Sigmoid colon (tissue), 7 donors: ENCODE measurements at regions of chr16 and their contacts with region 1.

Region 1: GRCh38 chr16:74862741-74863244 is 88.2 kb upstream of the FA2H start:
- DNase-seq: no peak
- H3K4me3 ChIP-seq: no peak overlapping the region
- H3K27ac ChIP-seq: no peak overlapping the region
- H3K4me1 ChIP-seq: peaks cover 0 to 9% (median 7%) of the 10 kb centered on the region in 4 donors
- H3K27me3 ChIP-seq: no peaks in the 10 kb centered on the region
- CTCF ChIP-seq: peak; percentile 65 to 87 (median 73)
- EP300 ChIP-seq: no peak
- POLR2A ChIP-seq: no peak

Region 2: GRCh38 chr16:74448992-74449434 is 413.8 kb before region 1 on chr16:
- intact Hi-C with region 1: no loop called
- DNase-seq: peak; percentile 87
- H3K4me3 ChIP-seq: no peak overlapping the region
- H3K27ac ChIP-seq: peak overlapping the region; percentile 57 to 70 (median 64)
- H3K4me1 ChIP-seq: peaks cover 0 to 14% (median 10%) of the 10 kb centered on the region in 4 donors
- H3K27me3 ChIP-seq: no peaks in the 10 kb centered on the region
- CTCF ChIP-seq: no peak
- EP300 ChIP-seq: no peak
- POLR2A ChIP-seq: no peak

Region 3: GRCh38 chr16:74709441-74709877 is 153.3 kb before region 1 on chr16:
- intact Hi-C with region 1: loop called (anchors 2 kb)
- DNase-seq: peak; percentile 85
- H3K4me3 ChIP-seq: no peak overlapping the region
- H3K27ac ChIP-seq: peak overlapping the region in 1 of 4 donors; percentile 4
- H3K4me1 ChIP-seq: no peaks in the 10 kb centered on the region
- H3K27me3 ChIP-seq: no peaks in the 10 kb centered on the region
- CTCF ChIP-seq: peak; percentile 84 to 95 (median 92)
- EP300 ChIP-seq: no peak
- POLR2A ChIP-seq: no peak

Region 4: GRCh38 chr16:74793571-74793970 is 69.2 kb before region 1 on chr16:
- intact Hi-C with region 1: no loop called
- DNase-seq: no peak
- H3K4me3 ChIP-seq: no peak overlapping the region
- H3K27ac ChIP-seq: no peak overlapping the region
- H3K4me1 ChIP-seq: no peaks in the 10 kb centered on the region
- H3K27me3 ChIP-seq: peaks cover 0 to 3% (median 0%) of the 10 kb centered on the region in 3 donors
- CTCF ChIP-seq: no peak
- EP300 ChIP-seq: no peak
- POLR2A ChIP-seq: no peak

Region 5: GRCh38 chr16:74813109-74813641 is 49.6 kb before region 1 on chr16:
- intact Hi-C with region 1: loop called (anchors 1 kb)
- DNase-seq: peak; percentile 78
- H3K4me3 ChIP-seq: no peak overlapping the region
- H3K27ac ChIP-seq: no peak overlapping the region
- H3K4me1 ChIP-seq: peaks cover 0 to 4% (median 3%) of the 10 kb centered on the region in 4 donors
- H3K27me3 ChIP-seq: no peaks in the 10 kb centered on the region
- CTCF ChIP-seq: peak; percentile 66 to 96 (median 91)
- EP300 ChIP-seq: no peak
- POLR2A ChIP-seq: no peak

Region 6: DNA sequence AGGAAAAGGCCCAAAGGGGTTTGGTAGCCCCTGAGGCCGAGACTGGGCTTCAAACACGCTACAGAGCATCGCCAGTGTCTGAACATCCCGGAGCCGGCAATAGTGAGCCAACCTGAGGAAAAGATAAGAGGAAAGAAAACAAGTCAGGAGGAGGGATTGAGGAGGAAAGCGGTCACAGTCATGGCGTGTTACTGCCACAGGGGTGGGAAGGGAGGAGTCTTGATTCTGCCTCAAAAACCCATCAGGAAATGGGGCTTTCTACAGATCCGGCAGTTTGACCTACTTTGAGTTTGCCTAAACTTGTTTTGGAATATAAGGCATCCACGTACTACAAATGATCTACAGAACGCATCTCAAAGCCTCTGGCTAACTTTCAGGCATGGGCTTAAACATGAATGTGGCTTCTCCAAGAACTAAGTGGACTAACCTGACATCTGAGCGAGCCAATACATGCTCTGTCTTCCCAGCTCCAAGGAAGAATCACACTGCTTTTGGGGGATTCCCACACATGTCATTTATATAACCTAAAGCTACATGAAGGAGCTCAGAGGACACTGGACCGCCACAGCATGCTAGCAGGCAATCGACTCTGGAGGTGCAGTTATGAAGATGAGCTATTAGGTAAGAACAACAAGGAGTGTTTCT is 25.5 kb after region 1 on chr16:
- intact Hi-C with region 1: no loop called
- DNase-seq: no peak
- H3K4me3 ChIP-seq: no peak overlapping the region
- H3K27ac ChIP-seq: no peak overlapping the region
- H3K4me1 ChIP-seq: no peaks in the 10 kb centered on the region
- H3K27me3 ChIP-seq: no peaks in the 10 kb centered on the region
- CTCF ChIP-seq: no peak
- EP300 ChIP-seq: no peak
- POLR2A ChIP-seq: no peak